Naive thymus-derived CD4-positive, alpha-beta T cell (primary cell): ENCODE measurements at regions of chr2 and their contacts with region 1.

Region 1: DNA sequence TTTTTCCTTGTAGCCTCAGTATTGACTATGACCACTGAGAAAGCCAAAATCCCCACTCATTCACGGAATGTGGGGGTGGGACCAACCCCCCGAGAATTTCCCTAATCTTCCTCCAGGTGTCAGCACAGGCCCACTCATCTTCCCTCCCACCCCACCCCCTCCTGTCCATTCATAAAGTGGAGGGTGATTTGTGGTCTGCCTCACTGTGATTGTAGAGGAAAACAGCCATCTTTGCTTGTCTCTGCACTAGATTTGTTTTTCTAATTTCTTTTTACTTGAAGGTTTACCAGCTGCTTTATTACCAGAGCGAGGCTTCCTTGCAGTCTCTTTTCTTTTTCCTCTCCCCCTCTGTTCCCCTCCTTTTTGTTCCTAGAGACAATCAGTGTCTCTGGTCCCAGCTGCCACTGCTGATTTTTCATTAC is 171.8 kb downstream of the ICOS start:
- DNase-seq: peak in 8 of 9 donors; percentile 40 to 70 (median 56)
- ATAC-seq: peak; percentile 74
- H3K4me3 ChIP-seq: peak overlapping the region; percentile 21
- H3K4me3 Mint-ChIP-seq: peak overlapping the region in 9 of 10 donors; percentile 81 to 88 (median 83)
- H3K27ac ChIP-seq: no peak overlapping the region
- H3K27ac Mint-ChIP-seq: peak overlapping the region in 7 of 9 donors; percentile 7 to 96 (median 48)
- H3K4me1 ChIP-seq: peaks cover 30 to 31% of the 10 kb centered on the region in 2 donors
- H3K4me1 Mint-ChIP-seq: peaks cover 31 to 75% (median 48%) of the 10 kb centered on the region in 7 donors
- H3K27me3 ChIP-seq: no peaks in the 10 kb centered on the region
- H3K27me3 Mint-ChIP-seq: peaks cover 0 to 12% (median 0%) of the 10 kb centered on the region in 5 donors

Region 2: GRCh38 chr2:203871371-203871983 is 236.9 kb before region 1 on chr2:
- CTCF ChIA-PET with region 1: no interaction called
- POLR2A ChIA-PET with region 1: no interaction called
- intact Hi-C with region 1: loop called in 1 of 2 experiments (anchors 5 kb)
- DNase-seq: peak in 1 of 9 donors; percentile 45
- ATAC-seq: peak; percentile 30
- H3K4me3 ChIP-seq: no peak overlapping the region
- H3K4me3 Mint-ChIP-seq: peak overlapping the region; percentile 55 to 96 (median 77)
- H3K27ac ChIP-seq: peak overlapping the region; percentile 79
- H3K27ac Mint-ChIP-seq: peak overlapping the region; percentile 48 to 99 (median 92)
- H3K4me1 ChIP-seq: peaks cover 56 to 64% of the 10 kb centered on the region in 2 donors
- H3K4me1 Mint-ChIP-seq: peaks cover 44 to 93% (median 80%) of the 10 kb centered on the region in 7 donors
- H3K27me3 ChIP-seq: no peaks in the 10 kb centered on the region
- H3K27me3 Mint-ChIP-seq: no peaks in the 10 kb centered on the region

Region 3: DNA sequence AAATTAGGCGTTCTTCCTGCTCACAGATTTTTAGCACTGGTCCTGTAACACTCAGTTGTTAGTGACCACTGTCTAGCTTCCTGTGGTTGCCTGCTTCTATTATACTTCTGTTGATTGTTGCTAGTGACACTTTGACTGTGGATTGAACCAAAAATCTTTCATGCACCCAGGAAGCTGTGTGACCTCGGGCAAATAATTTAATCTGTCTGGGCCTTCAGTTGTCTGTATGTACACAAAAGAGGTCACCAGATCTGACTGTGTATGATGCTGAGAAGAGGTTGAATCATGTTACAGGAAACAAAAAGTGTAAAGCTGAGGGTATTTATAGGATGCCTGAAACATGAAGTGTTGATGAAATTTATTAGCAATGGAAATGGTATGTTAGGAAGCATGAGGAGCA is 159.1 kb before region 1 on chr2:
- CTCF ChIA-PET with region 1: interaction called, 3 read pairs
- POLR2A ChIA-PET with region 1: no interaction called
- intact Hi-C with region 1: loop called in 1 of 2 experiments (anchors 5 kb)
- DNase-seq: no peak
- ATAC-seq: peak; percentile 29
- H3K4me3 ChIP-seq: no peak overlapping the region
- H3K4me3 Mint-ChIP-seq: peak overlapping the region; percentile 7 to 91 (median 64)
- H3K27ac ChIP-seq: no peak overlapping the region
- H3K27ac Mint-ChIP-seq: peak overlapping the region; percentile 4 to 86 (median 66)
- H3K4me1 ChIP-seq: peaks cover 56 to 65% of the 10 kb centered on the region in 2 donors
- H3K4me1 Mint-ChIP-seq: peaks cover 54 to 96% (median 91%) of the 10 kb centered on the region in 7 donors
- H3K27me3 ChIP-seq: no peaks in the 10 kb centered on the region
- H3K27me3 Mint-ChIP-seq: no peaks in the 10 kb centered on the region

Region 4: GRCh38 chr2:204177977-204178540 is 69.7 kb after region 1 on chr2:
- CTCF ChIA-PET with region 1: interaction called, 54 read pairs
- POLR2A ChIA-PET with region 1: no interaction called
- intact Hi-C with region 1: loop called (anchors 1 kb)
- DNase-seq: peak; percentile 35 to 75 (median 63)
- ATAC-seq: peak; percentile 73
- H3K4me3 ChIP-seq: no peak overlapping the region
- H3K4me3 Mint-ChIP-seq: no peak overlapping the region
- H3K27ac ChIP-seq: no peak overlapping the region
- H3K27ac Mint-ChIP-seq: no peak overlapping the region
- H3K4me1 ChIP-seq: no peaks in the 10 kb centered on the region
- H3K4me1 Mint-ChIP-seq: peaks cover 0 to 10% (median 0%) of the 10 kb centered on the region in 7 donors
- H3K27me3 ChIP-seq: no peaks in the 10 kb centered on the region
- H3K27me3 Mint-ChIP-seq: peaks cover 8 to 36% (median 12%) of the 10 kb centered on the region in 5 donors

Region 5: GRCh38 chr2:204691911-204692510 is 583.7 kb after region 1 on chr2:
- CTCF ChIA-PET with region 1: interaction called, 3 read pairs
- POLR2A ChIA-PET with region 1: no interaction called
- intact Hi-C with region 1: loop called (anchors 2 kb)
- DNase-seq: peak in 6 of 9 donors; percentile 4 to 42 (median 26)
- ATAC-seq: peak; percentile 55
- H3K4me3 ChIP-seq: no peak overlapping the region
- H3K4me3 Mint-ChIP-seq: no peak overlapping the region
- H3K27ac ChIP-seq: no peak overlapping the region
- H3K27ac Mint-ChIP-seq: no peak overlapping the region
- H3K4me1 ChIP-seq: peaks cover 0 to 6% of the 10 kb centered on the region in 2 donors
- H3K4me1 Mint-ChIP-seq: peaks cover 0 to 15% (median 9%) of the 10 kb centered on the region in 7 donors
- H3K27me3 ChIP-seq: no peaks in the 10 kb centered on the region
- H3K27me3 Mint-ChIP-seq: peaks cover 0 to 13% (median 0%) of the 10 kb centered on the region in 5 donors

Region 6: GRCh38 chr2:205680067-205680466 is 1571.7 kb after region 1 on chr2:
- CTCF ChIA-PET with region 1: interaction called, 3 read pairs
- POLR2A ChIA-PET with region 1: no interaction called
- intact Hi-C with region 1: loop called (anchors 1 to 5 kb)
- DNase-seq: peak in 7 of 9 donors; percentile 16 to 56 (median 39)
- ATAC-seq: peak; percentile 40
- H3K4me3 ChIP-seq: no peak overlapping the region
- H3K4me3 Mint-ChIP-seq: peak overlapping the region in 6 of 10 donors; percentile 2 to 68 (median 29)
- H3K27ac ChIP-seq: no peak overlapping the region
- H3K27ac Mint-ChIP-seq: peak overlapping the region in 1 of 9 donors; percentile 9
- H3K4me1 ChIP-seq: peaks cover 0 to 4% of the 10 kb centered on the region in 2 donors
- H3K4me1 Mint-ChIP-seq: peaks cover 16 to 43% (median 24%) of the 10 kb centered on the region in 7 donors
- H3K27me3 ChIP-seq: peaks cover 3 to 8% of the 10 kb centered on the region in 2 donors
- H3K27me3 Mint-ChIP-seq: peaks cover 40 to 55% (median 44%) of the 10 kb centered on the region in 5 donors

Region 7: DNA sequence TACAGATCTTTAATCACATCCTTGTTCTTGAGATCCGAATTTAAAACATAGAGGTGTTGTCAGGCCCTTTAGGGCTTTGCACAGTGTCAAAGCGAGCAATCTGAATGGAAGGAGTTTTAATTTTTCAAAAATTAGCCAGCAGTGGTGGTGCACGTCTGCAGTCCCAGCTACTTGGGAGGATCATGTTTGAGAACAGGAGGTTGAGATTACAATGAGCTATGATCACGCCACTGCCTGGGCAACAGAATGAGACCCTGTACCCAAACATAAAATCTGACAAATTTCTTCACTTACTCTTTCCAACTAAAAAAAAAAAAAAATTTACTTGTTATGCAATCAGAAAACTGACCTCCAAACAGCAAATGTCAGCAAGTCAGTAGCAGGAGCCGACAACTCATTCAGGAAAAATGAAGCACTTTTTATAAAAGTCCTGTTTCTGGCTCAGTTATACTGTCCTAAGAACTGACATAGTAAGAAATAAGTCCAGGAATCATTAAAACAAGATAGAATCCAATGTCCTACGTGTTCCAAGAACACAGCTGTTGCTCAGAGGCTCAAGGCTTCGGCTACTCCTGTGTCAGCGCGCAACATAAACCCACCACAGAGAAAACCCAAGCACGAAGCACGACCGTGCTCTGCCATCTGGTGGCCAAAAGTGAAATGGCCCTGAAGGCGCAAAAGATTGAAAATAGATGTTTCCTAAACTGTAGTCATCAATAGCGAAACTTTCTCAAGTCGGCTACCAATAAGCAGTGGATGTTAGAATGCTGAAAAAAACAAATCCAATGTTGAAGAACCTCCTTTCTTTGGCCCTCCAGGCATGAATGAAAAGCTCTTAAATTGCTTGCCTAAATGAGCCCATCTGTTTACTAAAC is 1839.5 kb after region 1 on chr2:
- CTCF ChIA-PET with region 1: no interaction called
- POLR2A ChIA-PET with region 1: no interaction called
- intact Hi-C with region 1: loop called in 1 of 2 experiments (anchors 1 kb)
- DNase-seq: peak in 8 of 9 donors; percentile 12 to 53 (median 28)
- ATAC-seq: peak; percentile 71
- H3K4me3 ChIP-seq: no peak overlapping the region
- H3K4me3 Mint-ChIP-seq: peak overlapping the region in 1 of 10 donors; percentile 13
- H3K27ac ChIP-seq: no peak overlapping the region
- H3K27ac Mint-ChIP-seq: no peak overlapping the region
- H3K4me1 ChIP-seq: no peaks in the 10 kb centered on the region
- H3K4me1 Mint-ChIP-seq: peaks cover 0 to 4% (median 3%) of the 10 kb centered on the region in 7 donors
- H3K27me3 ChIP-seq: no peaks in the 10 kb centered on the region
- H3K27me3 Mint-ChIP-seq: peaks cover 0 to 25% (median 9%) of the 10 kb centered on the region in 5 donors